ENCODE measurements at regions of chr13 and their contacts with region 1.

Region 1: GRCh38 chr13:42271337-42272114 is 426 bp upstream of the AKAP11 start:
- DNase-seq: peak; percentile 96
- H3K4me3 Mint-ChIP-seq: peak overlapping the region; percentile 98
- H3K27ac Mint-ChIP-seq: peak overlapping the region; percentile 98
- H3K4me1 Mint-ChIP-seq: peaks cover 43% of the 10 kb centered on the region
- H3K27me3 Mint-ChIP-seq: no peaks in the 10 kb centered on the region

Region 2: GRCh38 chr13:41465241-41465847 is 806.2 kb before region 1 on chr13:
- CTCF ChIA-PET with region 1: no interaction called
- POLR2A ChIA-PET with region 1: no interaction called
- intact Hi-C with region 1: loop called (anchors 2 kb)
- DNase-seq: peak; percentile 96
- H3K4me3 Mint-ChIP-seq: peak overlapping the region; percentile 66
- H3K27ac Mint-ChIP-seq: peak overlapping the region; percentile 97
- H3K4me1 Mint-ChIP-seq: peaks cover 92% of the 10 kb centered on the region
- H3K27me3 Mint-ChIP-seq: no peaks in the 10 kb centered on the region

Region 3: DNA sequence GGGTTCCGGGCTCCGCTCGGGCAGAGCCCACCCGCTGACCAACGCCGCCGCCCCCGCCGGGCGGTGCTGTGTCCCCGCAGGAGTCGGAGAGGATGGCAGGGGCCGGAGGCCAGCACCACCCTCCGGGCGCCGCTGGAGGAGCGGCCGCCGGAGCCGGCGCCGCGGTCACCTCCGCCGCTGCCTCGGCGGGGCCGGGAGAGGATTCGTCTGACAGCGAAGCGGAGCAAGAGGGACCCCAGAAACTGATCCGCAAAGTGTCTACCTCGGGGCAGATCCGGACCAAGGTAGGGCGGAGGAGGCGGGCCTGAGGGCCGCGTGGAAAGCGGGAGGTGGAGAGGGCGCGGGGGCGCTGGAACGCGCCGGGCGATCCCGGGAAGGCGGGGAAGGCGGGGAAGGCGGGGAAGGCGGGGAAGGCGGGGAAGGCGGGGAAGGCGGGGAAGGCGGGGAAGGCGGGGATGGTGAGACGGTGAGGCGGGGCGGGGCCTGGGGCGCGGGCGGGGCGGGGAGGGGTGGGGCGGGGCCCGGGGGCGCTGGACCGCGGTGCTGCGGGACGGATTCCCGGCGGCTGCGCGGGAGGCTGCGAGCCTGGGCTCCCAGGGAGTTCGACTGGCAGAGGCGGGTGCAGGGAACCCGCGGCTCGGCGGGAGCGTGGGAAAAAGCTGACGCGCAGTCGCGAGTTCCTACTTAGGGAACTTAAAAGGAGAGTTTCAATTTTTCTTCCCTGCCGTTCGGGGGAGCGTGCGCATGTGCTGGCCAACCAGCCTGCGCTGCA is 222.7 kb before region 1 on chr13:
- CTCF ChIA-PET with region 1: no interaction called
- POLR2A ChIA-PET with region 1: no interaction called
- intact Hi-C with region 1: loop called (anchors 5 kb)
- DNase-seq: peak; percentile 75
- H3K4me3 Mint-ChIP-seq: peak overlapping the region; percentile 83
- H3K27ac Mint-ChIP-seq: peak overlapping the region; percentile 67
- H3K4me1 Mint-ChIP-seq: peaks cover 12% of the 10 kb centered on the region
- H3K27me3 Mint-ChIP-seq: no peaks in the 10 kb centered on the region

Region 4: GRCh38 chr13:42354241-42355091 is 82.9 kb after region 1 on chr13:
- CTCF ChIA-PET with region 1: no interaction called
- POLR2A ChIA-PET with region 1: interaction called, 16 read pairs
- intact Hi-C with region 1: loop called (anchors 1 kb)
- DNase-seq: peak; percentile 66
- H3K4me3 Mint-ChIP-seq: peak overlapping the region; percentile 54
- H3K27ac Mint-ChIP-seq: peak overlapping the region; percentile 98
- H3K4me1 Mint-ChIP-seq: peaks cover 70% of the 10 kb centered on the region
- H3K27me3 Mint-ChIP-seq: no peaks in the 10 kb centered on the region

Region 5: DNA sequence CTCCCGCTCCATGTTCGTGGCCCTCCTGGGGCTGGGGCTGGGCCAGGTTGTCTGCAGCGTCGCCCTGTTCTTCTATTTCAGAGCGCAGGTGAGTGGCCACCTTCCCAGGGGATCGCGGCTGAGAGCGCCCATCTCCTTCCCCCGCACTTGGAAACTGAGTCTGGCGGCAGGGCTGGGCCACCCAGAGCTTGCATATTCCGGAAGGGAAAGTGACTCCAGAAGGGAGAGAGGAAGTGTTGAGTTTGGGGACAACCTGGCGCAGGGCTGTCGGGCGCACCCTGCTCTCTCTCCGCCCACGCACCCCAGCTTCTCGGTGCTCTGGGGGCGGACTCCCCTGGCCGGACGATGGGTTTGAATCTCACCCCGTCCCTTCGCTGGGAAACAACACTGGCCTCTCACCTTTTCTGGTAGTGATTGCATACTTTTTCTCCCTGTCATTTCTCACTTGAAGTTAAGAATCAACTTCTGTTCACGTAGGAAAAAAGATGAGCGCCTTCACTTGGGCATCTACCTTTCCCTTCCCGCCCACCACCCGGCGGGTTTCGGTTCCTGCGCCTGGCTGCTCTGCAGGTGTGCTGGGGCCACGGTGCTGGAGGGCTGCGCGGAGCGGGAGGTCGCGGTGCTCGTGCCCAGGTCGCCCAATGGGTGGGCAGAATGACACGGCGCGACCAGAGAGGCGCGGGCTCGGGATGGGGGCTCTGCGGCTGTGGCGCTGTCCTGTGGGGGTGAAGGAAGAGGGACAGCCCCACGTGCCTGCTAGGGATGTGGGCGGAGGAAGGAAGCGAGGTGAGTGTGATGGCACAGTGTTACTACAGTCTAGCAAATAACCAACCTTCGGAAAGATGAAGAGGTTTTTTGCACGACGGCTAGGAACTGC is 303.1 kb after region 1 on chr13:
- CTCF ChIA-PET with region 1: no interaction called
- POLR2A ChIA-PET with region 1: no interaction called
- intact Hi-C with region 1: loop called (anchors 5 kb)
- DNase-seq: peak; percentile 75
- H3K4me3 Mint-ChIP-seq: peak overlapping the region; percentile 73
- H3K27ac Mint-ChIP-seq: peak overlapping the region; percentile 55
- H3K4me1 Mint-ChIP-seq: peaks cover 34% of the 10 kb centered on the region
- H3K27me3 Mint-ChIP-seq: peaks cover 26% of the 10 kb centered on the region